ENCODE measurements at regions of chr10 and their contacts with region 1.

Region 1: DNA sequence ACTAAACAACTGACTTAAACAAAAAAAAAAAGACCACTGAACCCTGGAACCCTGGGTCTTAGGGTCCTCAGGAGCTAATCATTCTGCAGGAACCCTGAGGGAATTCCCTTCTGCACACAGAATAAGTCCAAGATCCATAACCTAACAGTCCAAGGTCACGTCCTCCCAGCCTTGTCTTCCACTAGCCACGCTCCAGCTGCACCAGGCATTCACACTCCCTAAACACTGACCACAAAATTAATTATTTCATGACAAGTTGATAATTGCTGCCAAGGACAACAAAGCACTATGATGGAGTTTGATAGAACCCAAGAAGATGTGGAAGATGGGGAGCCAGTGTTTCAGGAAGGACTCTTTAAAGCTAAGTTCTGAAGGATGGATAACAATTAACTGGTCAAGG is 130.6 kb downstream of the SH3PXD2A start:
- DNase-seq: no peak
- ATAC-seq: no peak
- H3K4me3 ChIP-seq: no peak overlapping the region
- H3K4me3 Mint-ChIP-seq: no peak overlapping the region
- H3K27ac ChIP-seq: no peak overlapping the region
- H3K27ac Mint-ChIP-seq: no peak overlapping the region
- H3K4me1 ChIP-seq: no peaks in the 10 kb centered on the region
- H3K4me1 Mint-ChIP-seq: no peaks in the 10 kb centered on the region
- H3K27me3 ChIP-seq: peaks cover 0 to 7% of the 10 kb centered on the region in 2 experiments
- H3K27me3 Mint-ChIP-seq: no peaks in the 10 kb centered on the region

Region 2: DNA sequence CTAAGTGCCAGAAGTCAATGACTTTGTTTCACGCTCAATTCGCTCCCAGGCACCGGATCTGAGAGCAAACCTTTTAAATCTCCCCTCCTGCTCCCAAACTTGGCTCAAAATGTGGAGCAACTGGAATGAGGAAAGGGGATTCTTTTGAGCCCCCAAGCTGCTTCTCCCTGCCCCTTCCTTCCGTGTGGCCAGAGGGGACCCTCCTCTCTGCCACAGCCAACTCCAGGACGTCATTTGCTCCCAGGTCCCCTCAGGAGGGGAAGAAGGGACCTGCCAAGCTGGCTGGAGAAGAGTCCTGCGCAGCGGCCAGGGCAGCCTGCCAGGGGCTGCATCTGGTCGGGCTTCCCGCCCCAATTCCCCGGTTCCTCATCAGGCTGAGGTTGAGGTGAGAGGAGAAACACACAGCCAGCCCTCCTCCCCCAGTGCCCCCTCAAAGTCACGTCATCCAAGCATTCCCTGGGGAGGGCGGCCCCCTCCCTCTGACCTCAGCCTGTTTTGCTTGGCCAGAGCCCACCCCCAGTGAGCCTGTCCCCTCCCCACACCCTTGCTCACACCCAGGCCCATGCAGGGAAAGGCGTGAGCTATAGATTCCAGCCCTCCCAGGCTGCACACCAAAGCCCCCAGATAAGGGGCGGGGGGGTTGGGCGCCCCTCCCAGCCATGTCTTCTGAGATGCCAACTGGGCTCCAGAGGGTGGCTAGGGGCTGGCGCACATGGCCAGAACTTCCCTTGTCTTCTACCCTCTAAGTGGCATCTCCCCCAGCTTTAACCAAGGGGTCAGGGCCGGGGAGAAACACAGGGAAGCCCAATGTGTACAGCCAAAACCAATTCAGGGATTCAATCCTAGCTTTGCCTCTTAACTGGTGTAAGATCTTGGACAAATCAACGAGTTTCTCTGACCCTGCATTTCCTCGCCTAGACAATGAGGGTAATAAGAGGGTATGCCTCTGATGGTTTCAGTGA is 95.6 kb after region 1 on chr10:
- CTCF ChIA-PET with region 1: no interaction called
- POLR2A ChIA-PET with region 1: interaction called in 1 of 2 experiments, 11 read pairs
- DNase-seq: no peak
- ATAC-seq: peak in 1 of 4 experiments; percentile 31
- H3K4me3 ChIP-seq: no peak overlapping the region
- H3K4me3 Mint-ChIP-seq: no peak overlapping the region
- H3K27ac ChIP-seq: no peak overlapping the region
- H3K27ac Mint-ChIP-seq: no peak overlapping the region
- H3K4me1 ChIP-seq: peaks cover 0 to 3% of the 10 kb centered on the region in 2 experiments
- H3K4me1 Mint-ChIP-seq: peaks cover 0 to 4% (median 0%) of the 10 kb centered on the region in 3 donors
- H3K27me3 ChIP-seq: peaks cover 0 to 36% of the 10 kb centered on the region in 2 experiments
- H3K27me3 Mint-ChIP-seq: peaks cover 15 to 22% of the 10 kb centered on the region in 2 donors

Measured in T-cell (primary cell).